Calu3 (cell line): ENCODE measurements at regions of chr11 and their contacts with region 1.

Region 1: GRCh38 chr11:119338318-119338907 is 2.3 kb downstream of the C1QTNF5 start:
- DNase-seq: peak; percentile 74
- H3K4me3 Mint-ChIP-seq: no peak overlapping the region
- H3K27ac Mint-ChIP-seq: no peak overlapping the region
- H3K4me1 Mint-ChIP-seq: peaks cover 8% of the 10 kb centered on the region
- H3K27me3 Mint-ChIP-seq: peaks cover 29% of the 10 kb centered on the region
- CTCF ChIP-seq: peak; percentile 42

Region 2: DNA sequence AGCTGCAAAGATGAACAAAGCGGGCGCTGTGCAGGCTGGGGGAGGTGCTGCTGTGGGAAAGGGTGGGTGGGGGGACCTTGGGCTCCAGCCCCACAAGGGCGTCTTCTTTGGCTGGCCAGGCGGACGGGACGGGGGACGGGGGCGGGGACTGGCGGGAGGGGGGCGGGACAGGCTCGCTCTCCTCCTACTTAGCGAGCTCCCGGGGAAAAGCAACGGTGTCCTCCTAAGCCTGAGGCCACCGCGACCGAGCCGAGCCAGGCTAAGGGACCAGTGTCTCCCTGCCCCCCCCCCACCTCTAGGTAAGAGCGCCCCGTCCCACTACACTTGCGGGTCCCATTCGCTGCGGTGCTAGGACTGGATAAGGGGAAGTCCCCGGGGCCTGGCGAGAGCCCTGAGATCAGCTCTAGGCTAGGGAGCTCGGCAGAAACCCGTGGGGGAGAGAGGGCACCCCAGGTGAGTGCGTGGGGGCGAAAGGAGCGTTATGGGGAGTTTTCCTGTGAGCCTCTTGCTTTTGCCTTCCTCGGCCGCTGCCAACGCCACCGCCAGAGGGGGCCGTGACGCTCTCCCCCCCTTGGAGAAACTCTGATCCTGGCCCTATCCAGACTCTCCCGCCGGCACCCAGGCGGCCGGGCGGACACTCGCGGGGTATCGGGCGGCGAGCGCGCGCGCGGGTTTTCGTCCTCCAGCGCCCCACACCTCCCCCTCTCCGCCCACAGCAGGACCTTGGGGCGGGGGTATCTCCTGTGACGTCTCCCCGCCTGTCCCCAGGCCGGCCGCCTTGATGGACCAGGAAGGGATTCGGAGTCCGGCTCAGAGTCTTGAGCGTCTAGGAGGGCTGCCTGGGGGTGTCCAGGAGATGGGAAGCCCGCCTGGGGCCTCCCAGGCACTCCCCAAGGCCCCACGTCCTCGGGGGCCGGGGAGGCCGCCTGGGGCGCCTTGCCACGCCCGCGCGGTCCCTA is 730.7 kb before region 1 on chr11 and contains the start of gene PHLDB1:
- CTCF ChIA-PET with region 1: interaction called, 11 read pairs
- intact Hi-C with region 1: no loop called
- DNase-seq: peak; percentile 68
- H3K4me3 Mint-ChIP-seq: peak within 1 kb of the TSS; percentile 78
- H3K27ac Mint-ChIP-seq: no peak within 1 kb of the TSS
- H3K4me1 Mint-ChIP-seq: peaks cover 35% of the 10 kb centered on the region
- H3K27me3 Mint-ChIP-seq: peaks cover 37% of the 10 kb centered on the region
- CTCF ChIP-seq: no peak
- total RNA-seq, gene PHLDB1: 30.3 and 37.1 TPM in 2 replicates

Region 3: GRCh38 chr11:119323538-119324033 is 14.8 kb before region 1 on chr11:
- CTCF ChIA-PET with region 1: interaction called, 14 read pairs
- intact Hi-C with region 1: no loop called
- DNase-seq: peak; percentile 70
- H3K4me3 Mint-ChIP-seq: no peak overlapping the region
- H3K27ac Mint-ChIP-seq: no peak overlapping the region
- H3K4me1 Mint-ChIP-seq: no peaks in the 10 kb centered on the region
- H3K27me3 Mint-ChIP-seq: peaks cover 18% of the 10 kb centered on the region
- CTCF ChIP-seq: peak; percentile 27

Region 4: GRCh38 chr11:119373921-119374631 is 35.7 kb after region 1 on chr11:
- CTCF ChIA-PET with region 1: interaction called, 12 read pairs
- intact Hi-C with region 1: no loop called
- DNase-seq: peak; percentile 80
- H3K4me3 Mint-ChIP-seq: no peak overlapping the region
- H3K27ac Mint-ChIP-seq: no peak overlapping the region
- H3K4me1 Mint-ChIP-seq: peaks cover 8% of the 10 kb centered on the region
- H3K27me3 Mint-ChIP-seq: no peaks in the 10 kb centered on the region
- CTCF ChIP-seq: peak; percentile 68

Region 5: DNA sequence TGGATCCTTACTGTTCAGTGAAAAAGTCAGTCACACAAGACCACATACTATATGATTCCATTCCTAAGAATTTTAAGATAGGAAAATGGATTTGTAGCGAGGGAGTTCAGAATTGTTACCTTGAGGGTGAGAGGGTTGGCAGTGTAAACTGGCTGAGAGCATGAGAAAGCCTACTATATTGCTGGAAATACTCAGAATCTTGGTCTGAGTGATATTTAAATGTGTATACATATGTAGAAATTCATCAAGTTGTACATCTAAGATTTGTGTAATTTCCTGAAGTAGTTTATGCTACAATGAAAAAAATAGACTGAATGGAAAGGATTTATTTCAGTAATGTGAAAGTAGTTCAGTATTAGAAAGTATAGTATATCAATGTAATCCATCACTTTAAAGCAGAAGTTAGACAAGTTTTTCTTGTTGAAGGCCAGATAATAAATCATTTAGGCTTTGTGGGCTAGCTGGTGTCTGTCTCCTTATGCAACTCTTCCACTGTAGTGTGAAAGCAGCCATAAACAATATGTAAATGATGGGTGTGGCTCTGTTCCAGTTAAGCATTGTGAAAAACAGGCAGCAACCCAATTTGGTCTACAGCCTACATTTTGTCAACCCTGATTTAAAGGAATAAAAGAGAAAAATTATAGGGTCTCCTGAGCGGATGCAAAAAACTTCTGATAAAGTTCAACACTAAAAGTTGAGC is 211.8 kb after region 1 on chr11:
- CTCF ChIA-PET with region 1: no interaction called
- intact Hi-C with region 1: no loop called
- DNase-seq: no peak
- H3K4me3 Mint-ChIP-seq: no peak overlapping the region
- H3K27ac Mint-ChIP-seq: no peak overlapping the region
- H3K4me1 Mint-ChIP-seq: no peaks in the 10 kb centered on the region
- H3K27me3 Mint-ChIP-seq: no peaks in the 10 kb centered on the region
- CTCF ChIP-seq: no peak